Caco-2 (cell line): ENCODE measurements at regions of chr16 and their contacts with region 1.

Region 1: GRCh38 chr16:4734063-4734729 is at the starts of genes ANKS3 and DNAAF8:
- DNase-seq: peak; percentile 96 to 98
- H3K4me3 ChIP-seq: peak within 1 kb of the TSS; percentile 85
- H3K4me3 Mint-ChIP-seq: peak within 1 kb of the TSS; percentile 97
- H3K27ac Mint-ChIP-seq: peak within 1 kb of the TSS; percentile 99
- H3K4me1 ChIP-seq: peaks cover 4% of the 10 kb centered on the region; the same call in 1 of the 2 replicates
- H3K4me1 Mint-ChIP-seq: no peaks in the 10 kb centered on the region
- H3K27me3 ChIP-seq: no peaks in the 10 kb centered on the region
- H3K27me3 Mint-ChIP-seq: no peaks in the 10 kb centered on the region
- CTCF ChIP-seq: no peak
- total RNA-seq, gene ANKS3: 27.4 and 28.1 TPM in 2 replicates
- total RNA-seq, gene DNAAF8: 0.54 TPM in 1 of 2 replicates, not detected in the other

Region 2: DNA sequence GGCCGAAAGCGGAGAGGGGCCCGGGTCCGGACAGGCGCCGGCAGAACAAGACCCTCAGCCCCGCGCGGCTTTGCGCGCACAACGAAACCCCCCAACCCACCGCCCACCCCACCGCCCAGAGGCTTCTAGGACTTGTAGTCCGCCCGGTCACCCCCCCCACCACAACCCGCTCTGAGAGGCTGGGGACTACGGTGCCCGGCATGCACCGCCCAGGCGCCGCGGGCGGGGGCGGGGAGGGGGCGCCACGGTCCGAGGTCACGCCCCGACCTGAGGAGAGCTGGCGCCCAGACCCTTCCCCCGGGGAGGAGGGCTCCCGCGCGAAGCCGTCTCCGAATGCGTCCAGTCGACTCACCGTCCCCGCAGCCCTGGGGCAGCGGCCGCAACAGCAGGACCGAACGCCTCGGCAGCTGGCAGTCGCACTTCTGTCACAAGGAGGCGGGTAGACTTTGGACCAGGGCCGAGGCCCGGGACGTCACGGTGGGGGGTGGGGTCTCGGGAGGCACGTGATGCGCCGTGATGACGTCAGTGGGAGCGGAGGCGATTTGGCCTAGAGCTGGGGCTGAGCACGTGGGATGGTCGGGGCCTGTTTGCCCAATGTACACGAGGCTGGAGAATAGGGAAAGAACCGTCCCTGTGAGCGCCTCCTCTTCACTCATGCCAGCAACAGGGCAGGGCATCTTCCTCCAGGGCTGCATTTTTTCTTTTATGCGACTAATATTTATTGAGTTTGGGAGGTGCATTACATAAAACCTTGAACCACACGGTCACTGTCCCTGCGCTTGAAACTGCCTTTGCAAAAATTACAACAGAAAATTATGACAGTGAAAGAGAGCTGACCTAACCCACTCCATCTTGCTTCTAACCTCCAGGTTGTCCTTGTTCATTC is 195.6 kb before region 1 on chr16 and contains the start of gene CDIP1:
- CTCF ChIA-PET with region 1: no interaction called
- POLR2A ChIA-PET with region 1: interaction called, 10 read pairs
- intact Hi-C with region 1: no loop called
- DNase-seq: peak; percentile 97
- H3K4me3 ChIP-seq: peak within 1 kb of the TSS; percentile 90
- H3K4me3 Mint-ChIP-seq: peak within 1 kb of the TSS; percentile 75
- H3K27ac Mint-ChIP-seq: peak within 1 kb of the TSS; percentile 88
- H3K4me1 ChIP-seq: peaks cover 6% of the 10 kb centered on the region
- H3K4me1 Mint-ChIP-seq: no peaks in the 10 kb centered on the region
- H3K27me3 ChIP-seq: no peaks in the 10 kb centered on the region
- H3K27me3 Mint-ChIP-seq: no peaks in the 10 kb centered on the region
- CTCF ChIP-seq: no peak
- total RNA-seq, gene CDIP1: 45.0 and 51.7 TPM in 2 replicates

Region 3: DNA sequence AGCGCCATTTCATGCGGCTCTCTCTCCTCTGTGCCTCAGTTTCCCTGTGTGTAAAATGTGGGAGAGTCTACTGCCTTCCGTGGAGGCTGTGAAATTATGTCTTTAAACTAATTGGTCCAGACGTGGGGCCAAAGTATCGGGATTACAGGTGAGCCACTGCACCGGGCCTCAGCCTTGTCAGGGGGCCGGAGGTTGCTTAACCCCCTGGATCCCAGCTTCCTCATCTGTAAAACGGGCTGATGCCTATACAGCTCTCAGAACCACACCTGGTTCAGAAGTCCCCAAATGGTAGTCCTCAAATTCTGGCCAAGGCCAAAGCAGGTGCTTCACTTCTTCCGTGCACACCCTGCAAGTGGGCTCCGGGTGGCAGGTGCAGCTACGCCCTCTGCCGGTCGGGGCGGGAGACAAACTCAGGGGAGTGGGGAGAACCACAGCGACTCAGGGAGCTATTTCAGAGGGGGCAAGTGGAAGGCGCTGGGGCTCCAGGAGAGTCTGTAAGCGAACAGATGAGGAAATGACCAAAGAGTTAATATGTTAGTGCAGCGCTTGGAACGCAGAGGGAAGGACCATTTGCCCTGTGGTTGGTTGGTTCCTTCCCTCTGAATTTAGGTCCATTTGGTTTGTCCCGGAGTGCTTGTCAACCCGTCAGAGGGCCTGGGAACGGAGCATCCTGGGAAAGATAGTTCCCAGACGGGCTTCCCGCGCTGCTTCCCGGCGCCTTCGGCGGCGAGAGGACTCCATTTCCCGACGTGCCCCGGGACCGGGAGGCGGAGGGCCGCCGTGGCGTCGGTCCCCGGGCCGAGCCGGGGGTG is 110.0 kb before region 1 on chr16 and contains the start of gene MGRN1:
- CTCF ChIA-PET with region 1: interaction called, 10 read pairs
- POLR2A ChIA-PET with region 1: interaction called, 3 read pairs
- intact Hi-C with region 1: no loop called
- DNase-seq: peak; percentile 95
- H3K4me3 ChIP-seq: peak within 1 kb of the TSS; percentile 99
- H3K4me3 Mint-ChIP-seq: peak within 1 kb of the TSS; percentile 84
- H3K27ac Mint-ChIP-seq: peak within 1 kb of the TSS; percentile 99
- H3K4me1 ChIP-seq: peaks cover 6% of the 10 kb centered on the region; the same call in 1 of the 2 replicates
- H3K4me1 Mint-ChIP-seq: peaks cover 8% of the 10 kb centered on the region
- H3K27me3 ChIP-seq: no peaks in the 10 kb centered on the region
- H3K27me3 Mint-ChIP-seq: no peaks in the 10 kb centered on the region
- CTCF ChIP-seq: peak; percentile 84 to 94
- total RNA-seq, gene MGRN1: 67.1 and 72.3 TPM in 2 replicates

Region 4: DNA sequence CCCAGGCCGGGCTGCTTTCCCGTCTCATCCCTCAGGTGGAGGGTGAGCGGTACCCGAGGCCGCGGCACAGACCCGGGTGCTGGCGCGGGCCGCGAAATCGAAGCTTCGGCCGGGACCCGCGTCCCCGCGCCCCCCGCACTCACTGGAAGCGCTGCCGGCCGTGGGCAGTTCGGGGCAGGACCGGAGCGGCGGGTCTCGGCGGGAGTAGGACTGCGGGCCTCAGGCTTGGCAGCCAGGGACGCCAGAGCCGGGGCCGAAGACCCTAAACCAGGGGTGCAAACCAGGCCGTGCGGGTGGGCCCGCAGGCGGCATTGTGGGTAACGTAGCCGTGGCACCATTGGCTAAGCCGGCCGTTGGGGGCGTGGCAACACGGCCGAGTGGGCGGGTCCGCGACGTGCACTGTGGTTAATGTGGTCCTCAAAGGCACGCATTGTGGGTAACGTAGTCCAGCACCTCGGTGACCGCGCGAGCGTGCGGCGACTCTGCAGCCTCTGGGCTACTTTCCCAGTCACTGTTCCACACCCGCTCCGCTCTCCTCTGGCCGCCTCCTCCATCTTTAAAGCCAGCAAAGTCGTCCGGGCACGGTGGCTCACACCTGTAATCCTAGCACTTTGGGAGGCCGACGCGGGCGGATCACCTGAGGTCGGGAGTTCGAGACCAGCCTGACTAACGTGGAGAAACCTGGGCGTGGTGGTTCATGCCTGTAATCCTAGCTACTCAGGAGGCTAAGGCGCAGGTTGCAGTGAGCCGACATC is 32.9 kb after region 1 on chr16 and contains the start of gene ZNF500:
- CTCF ChIA-PET with region 1: interaction called, 7 read pairs
- POLR2A ChIA-PET with region 1: interaction called, 20 read pairs
- intact Hi-C with region 1: loop called (anchors 2 kb)
- DNase-seq: peak; percentile 97 to 98
- H3K4me3 ChIP-seq: peak within 1 kb of the TSS; percentile 77
- H3K4me3 Mint-ChIP-seq: peak within 1 kb of the TSS; percentile 77
- H3K27ac Mint-ChIP-seq: peak within 1 kb of the TSS; percentile 71
- H3K4me1 ChIP-seq: peaks cover 10% of the 10 kb centered on the region; the same call in 1 of the 2 replicates
- H3K4me1 Mint-ChIP-seq: peaks cover 10% of the 10 kb centered on the region
- H3K27me3 ChIP-seq: no peaks in the 10 kb centered on the region
- H3K27me3 Mint-ChIP-seq: no peaks in the 10 kb centered on the region
- CTCF ChIP-seq: no peak
- total RNA-seq, gene ZNF500: 12.9 and 13.3 TPM in 2 replicates

Region 5: GRCh38 chr16:4957720-4958509 is 223.7 kb after region 1 on chr16 and contains the start of gene SEC14L5:
- CTCF ChIA-PET with region 1: interaction called, 3 read pairs
- POLR2A ChIA-PET with region 1: no interaction called
- intact Hi-C with region 1: loop called (anchors 2 kb)
- DNase-seq: peak; percentile 98 to 100
- H3K4me3 ChIP-seq: peak within 1 kb of the TSS; percentile 45
- H3K4me3 Mint-ChIP-seq: peak within 1 kb of the TSS; percentile 71
- H3K27ac Mint-ChIP-seq: peak within 1 kb of the TSS; percentile 2
- H3K4me1 ChIP-seq: peaks cover 10% of the 10 kb centered on the region
- H3K4me1 Mint-ChIP-seq: peaks cover 7% of the 10 kb centered on the region
- H3K27me3 ChIP-seq: no peaks in the 10 kb centered on the region
- H3K27me3 Mint-ChIP-seq: peaks cover 4% of the 10 kb centered on the region
- CTCF ChIP-seq: no peak
- total RNA-seq, gene SEC14L5: 0.14 and 0.67 TPM in 2 replicates